Dorsolateral prefrontal cortex (tissue), 120 donors: ENCODE measurements at regions of chr5 and their contacts with region 1.

Region 1: GRCh38 chr5:15499528-15500324 is at the start of gene FBXL7:
- DNase-seq: peak; percentile 53 to 88 (median 71)
- H3K4me3 ChIP-seq: peak within 1 kb of the TSS; percentile 41 to 85 (median 72)
- H3K27ac ChIP-seq: peak within 1 kb of the TSS in 57 of 59 donors; percentile 24 to 93 (median 82)
- H3K27me3 ChIP-seq: peaks cover 0 to 38% (median 6%) of the 10 kb centered on the region in 45 donors
- CTCF ChIP-seq: peak in 49 of 56 donors; percentile 7 to 64 (median 41)
- total RNA-seq, gene FBXL7: 7.9 to 39.1 (median 15.8) TPM

Region 2: GRCh38 chr5:15431923-15432322 is 67.8 kb before region 1 on chr5:
- intact Hi-C with region 1: no loop called
- DNase-seq: no peak
- H3K4me3 ChIP-seq: no peak overlapping the region
- H3K27ac ChIP-seq: no peak overlapping the region
- H3K27me3 ChIP-seq: peaks cover 0 to 6% (median 0%) of the 10 kb centered on the region in 45 donors
- CTCF ChIP-seq: no peak

Region 3: GRCh38 chr5:15452781-15453180 is 46.9 kb before region 1 on chr5:
- intact Hi-C with region 1: no loop called
- DNase-seq: no peak
- H3K4me3 ChIP-seq: no peak overlapping the region
- H3K27ac ChIP-seq: no peak overlapping the region
- H3K27me3 ChIP-seq: no peaks in the 10 kb centered on the region
- CTCF ChIP-seq: no peak

Region 4: GRCh38 chr5:15694696-15695214 is 195.0 kb after region 1 on chr5:
- intact Hi-C with region 1: no loop called
- DNase-seq: no peak
- H3K4me3 ChIP-seq: no peak overlapping the region
- H3K27ac ChIP-seq: peak overlapping the region in 42 of 59 donors; percentile 3 to 75 (median 48)
- H3K27me3 ChIP-seq: no peaks in the 10 kb centered on the region
- CTCF ChIP-seq: no peak

Region 5: GRCh38 chr5:15821506-15821905 is 321.8 kb after region 1 on chr5:
- intact Hi-C with region 1: loop called in 1 of 2 experiments (anchors 10 kb)
- DNase-seq: no peak
- H3K4me3 ChIP-seq: no peak overlapping the region
- H3K27ac ChIP-seq: no peak overlapping the region
- H3K27me3 ChIP-seq: no peaks in the 10 kb centered on the region
- CTCF ChIP-seq: no peak